ENCODE measurements at regions of chr14 and their contacts with region 1.

Region 1: DNA sequence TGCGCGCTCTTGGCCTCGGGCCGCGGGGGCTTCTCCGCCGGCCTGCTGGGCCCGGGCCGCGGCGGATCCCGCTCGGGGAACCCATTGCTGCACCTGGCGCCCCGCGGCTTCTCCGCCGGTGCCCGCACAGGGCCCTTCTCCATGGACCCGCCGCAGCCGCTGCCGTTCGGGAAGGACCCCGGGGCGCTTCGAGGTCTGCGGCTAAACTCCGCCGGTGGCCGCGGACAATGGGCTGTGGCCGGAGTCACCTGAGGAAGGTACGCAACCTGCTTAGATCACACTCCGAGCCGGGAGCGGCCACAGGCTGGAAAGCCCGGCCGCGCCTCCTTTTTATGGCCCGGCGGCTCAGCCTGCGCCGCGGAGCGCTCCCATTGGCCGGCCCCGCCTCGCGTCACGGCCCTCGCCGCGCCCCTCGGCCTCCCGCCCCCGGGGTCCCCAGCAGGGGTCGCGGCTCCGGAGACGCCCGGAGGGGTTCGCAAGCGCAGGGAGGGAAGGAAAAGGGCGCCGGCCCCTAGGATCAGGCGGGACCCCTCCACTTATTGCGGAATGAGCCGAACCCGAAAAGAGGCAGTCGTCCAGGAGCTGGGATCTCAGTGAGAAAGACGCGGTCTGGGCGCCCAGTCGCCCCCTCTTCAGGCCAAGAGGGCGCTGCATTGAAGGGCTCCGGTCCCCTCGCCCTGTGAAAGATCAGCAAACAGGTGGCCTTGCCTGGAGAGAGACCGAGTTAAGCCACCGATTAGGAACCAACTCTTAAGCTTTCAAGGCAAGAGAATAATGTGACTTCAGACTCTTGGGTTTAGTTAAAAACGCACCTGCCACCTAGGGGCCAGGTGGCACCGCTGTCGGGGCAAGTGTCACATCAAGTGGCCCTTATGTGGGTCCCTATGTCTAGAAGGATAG is at the start of gene GCH1:
- DNase-seq: peak; percentile 72
- H3K4me3 Mint-ChIP-seq: peak within 1 kb of the TSS; percentile 86
- H3K27ac Mint-ChIP-seq: peak within 1 kb of the TSS; percentile 88
- H3K4me1 Mint-ChIP-seq: peaks cover 20% of the 10 kb centered on the region
- H3K27me3 Mint-ChIP-seq: no peaks in the 10 kb centered on the region
- total RNA-seq, gene GCH1: 56.8 to 57.3 TPM

Region 2: DNA sequence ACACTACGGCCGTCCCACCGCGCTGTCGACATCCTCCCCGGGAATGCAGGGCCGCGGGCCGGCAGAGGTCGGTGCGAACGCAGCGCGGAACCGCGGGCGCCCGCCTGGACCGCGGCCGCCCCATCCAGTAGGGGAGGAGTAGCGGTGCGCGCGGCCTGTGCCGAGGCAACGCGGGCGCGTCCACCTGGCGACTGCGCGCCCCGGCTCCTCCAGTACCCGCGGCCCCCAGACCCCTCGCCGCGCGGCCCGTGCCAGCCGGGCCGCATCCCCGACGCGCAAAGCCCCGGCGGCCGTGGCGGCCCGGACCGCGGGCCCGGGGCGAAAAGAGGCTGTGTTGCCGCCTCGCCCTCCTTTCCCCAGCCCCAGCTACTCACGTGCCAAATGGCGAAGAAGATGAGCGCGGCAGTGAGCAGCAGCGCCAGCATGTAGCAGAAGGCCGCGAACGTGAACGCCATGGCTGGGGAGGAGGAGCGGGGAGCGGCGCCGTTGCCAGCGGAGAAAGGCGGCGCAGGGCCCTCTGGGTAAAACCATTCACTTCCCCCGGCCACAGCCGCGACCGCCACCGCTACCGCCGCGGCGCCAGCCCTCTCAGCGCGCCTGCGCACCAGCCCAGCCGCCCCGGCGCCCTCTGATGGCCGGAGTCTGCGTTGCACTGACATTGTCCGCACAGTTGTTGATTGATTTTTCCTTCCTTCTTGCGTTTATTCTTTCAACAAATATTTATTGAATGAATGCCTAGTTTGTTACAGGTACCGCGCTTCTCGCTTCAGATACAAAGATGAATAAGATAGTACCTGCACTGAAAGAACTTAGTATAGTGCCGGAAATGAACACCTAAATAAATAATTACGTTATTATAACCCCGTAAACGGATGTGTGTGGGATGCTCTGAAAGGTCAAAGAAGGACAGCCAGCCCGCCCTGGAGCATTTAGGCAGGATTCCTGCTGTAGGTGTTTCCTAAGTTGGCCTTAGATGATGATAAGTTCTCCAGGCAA is 461.6 kb before region 1 on chr14 and contains the start of gene CNIH1:
- CTCF ChIA-PET with region 1: no interaction called
- intact Hi-C with region 1: loop called (anchors 5 kb)
- DNase-seq: peak; percentile 93
- H3K4me3 Mint-ChIP-seq: peak within 1 kb of the TSS; percentile 87
- H3K27ac Mint-ChIP-seq: peak within 1 kb of the TSS; percentile 97
- H3K4me1 Mint-ChIP-seq: peaks cover 48% of the 10 kb centered on the region
- H3K27me3 Mint-ChIP-seq: no peaks in the 10 kb centered on the region
- total RNA-seq, gene CNIH1: 68.1 to 78.4 TPM

Region 3: DNA sequence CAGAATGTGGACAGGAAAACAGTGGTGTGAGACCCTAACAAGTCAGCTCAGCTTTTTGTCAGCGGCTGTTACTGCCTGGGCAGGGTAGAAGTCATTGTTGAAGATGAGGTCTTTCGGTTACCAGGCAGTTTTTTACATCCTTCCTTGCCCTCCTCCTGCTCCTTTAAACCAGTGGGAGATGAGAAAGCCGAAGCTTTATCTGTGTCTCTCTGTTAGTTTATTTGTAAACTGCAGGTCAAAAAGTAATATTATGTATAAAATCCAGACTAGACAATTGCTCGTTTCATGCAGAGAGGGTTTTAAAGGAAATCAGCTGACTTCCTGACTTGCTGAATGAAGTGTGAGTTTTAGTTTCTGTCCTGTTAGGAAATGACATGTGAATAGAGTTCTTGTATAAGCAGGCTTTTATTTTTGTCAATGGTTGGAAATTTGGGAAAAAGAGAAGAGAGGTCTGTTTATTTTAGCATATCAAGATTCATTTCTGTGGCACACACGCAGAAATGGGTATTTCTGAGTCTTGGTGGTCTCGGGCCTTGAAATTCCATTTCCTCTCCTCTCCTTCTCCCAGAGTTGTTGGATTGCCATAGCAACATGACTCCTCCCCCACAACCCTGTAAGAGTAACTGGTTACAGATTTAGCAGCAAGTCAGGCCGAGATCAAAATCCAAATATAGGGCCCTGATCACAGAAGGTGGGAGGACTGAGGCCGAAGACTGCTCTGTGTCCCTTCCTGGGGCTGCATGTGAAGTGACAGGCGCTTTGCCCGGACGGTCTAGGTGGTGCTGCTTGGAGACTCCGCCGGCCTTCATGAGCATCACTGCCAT is 275.0 kb before region 1 on chr14:
- CTCF ChIA-PET with region 1: no interaction called
- intact Hi-C with region 1: loop called (anchors 5 kb)
- DNase-seq: peak; percentile 62
- H3K4me3 Mint-ChIP-seq: peak overlapping the region; percentile 61
- H3K27ac Mint-ChIP-seq: peak overlapping the region; percentile 86
- H3K4me1 Mint-ChIP-seq: peaks cover 57% of the 10 kb centered on the region
- H3K27me3 Mint-ChIP-seq: no peaks in the 10 kb centered on the region

Region 4: DNA sequence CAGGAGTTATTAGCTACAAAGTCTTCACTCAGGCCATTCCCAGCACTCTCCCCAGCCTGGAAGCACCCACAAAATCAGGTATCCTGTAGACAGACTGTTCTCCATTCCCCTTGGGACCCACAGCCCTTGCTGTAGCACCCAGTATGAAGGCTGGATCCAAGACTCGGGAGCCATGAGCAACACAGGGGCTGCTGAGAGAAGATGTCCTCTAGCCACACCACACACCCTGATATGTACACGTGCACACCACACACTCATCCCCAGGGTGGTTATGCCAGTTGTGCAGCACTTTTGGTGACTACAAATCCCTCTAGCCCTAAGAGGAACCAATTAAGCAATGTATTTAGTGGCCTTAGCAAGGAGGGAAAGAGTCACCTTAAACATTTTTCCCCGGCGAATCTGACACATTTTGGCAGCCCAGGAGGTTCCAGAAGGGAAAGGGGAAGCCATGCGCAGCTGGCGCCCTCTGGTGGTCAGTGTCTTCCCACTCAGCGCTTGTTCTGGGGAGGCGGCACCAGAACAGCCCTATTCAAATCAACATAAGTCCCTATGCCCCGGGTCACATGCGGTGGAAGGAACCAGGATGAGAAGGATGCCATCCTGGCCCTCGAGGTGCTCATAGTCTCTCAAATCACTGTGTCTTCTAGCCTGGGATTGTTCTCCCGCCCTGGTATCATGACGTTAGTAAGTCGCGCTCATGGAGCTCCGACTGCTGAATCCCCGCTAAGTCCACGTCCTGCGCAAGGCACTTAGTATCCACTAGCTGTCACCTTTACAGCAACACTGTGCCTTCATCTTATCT is 97.0 kb before region 1 on chr14:
- CTCF ChIA-PET with region 1: interaction called, 3 read pairs
- intact Hi-C with region 1: loop called (anchors 2 kb)
- DNase-seq: peak; percentile 90
- H3K4me3 Mint-ChIP-seq: peak overlapping the region; percentile 6
- H3K27ac Mint-ChIP-seq: no peak overlapping the region
- H3K4me1 Mint-ChIP-seq: peaks cover 6% of the 10 kb centered on the region
- H3K27me3 Mint-ChIP-seq: peaks cover 11% of the 10 kb centered on the region

Region 5: DNA sequence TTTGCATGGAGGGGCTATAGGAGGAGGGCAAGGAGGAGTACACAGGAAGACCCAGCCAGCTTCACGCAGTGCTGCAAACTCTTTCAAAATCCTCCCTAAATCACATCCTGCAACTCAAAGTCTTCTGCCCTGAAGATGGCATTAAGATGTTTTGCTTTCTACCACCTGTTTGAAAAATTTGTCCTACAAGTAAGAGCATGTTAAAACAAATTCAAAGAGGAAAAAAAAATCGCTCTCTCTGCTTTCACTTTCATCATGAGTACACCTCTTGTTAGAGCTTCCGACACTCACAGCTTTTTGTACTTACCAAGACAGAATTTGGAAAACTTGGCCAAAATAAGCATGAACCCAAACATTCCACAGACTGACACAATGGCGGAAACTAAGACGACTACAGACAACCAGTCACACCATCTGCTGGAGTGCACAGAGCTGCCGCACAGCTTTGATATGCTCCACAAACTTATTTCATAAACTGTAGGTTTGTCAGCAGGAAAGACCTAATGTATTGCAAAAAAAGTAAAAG is 21.5 kb before region 1 on chr14:
- CTCF ChIA-PET with region 1: interaction called, 19 read pairs
- intact Hi-C with region 1: loop called (anchors 1 kb)
- DNase-seq: peak; percentile 38
- H3K4me3 Mint-ChIP-seq: peak overlapping the region; percentile 78
- H3K27ac Mint-ChIP-seq: peak overlapping the region; percentile 96
- H3K4me1 Mint-ChIP-seq: peaks cover 34% of the 10 kb centered on the region
- H3K27me3 Mint-ChIP-seq: no peaks in the 10 kb centered on the region

Region 6: DNA sequence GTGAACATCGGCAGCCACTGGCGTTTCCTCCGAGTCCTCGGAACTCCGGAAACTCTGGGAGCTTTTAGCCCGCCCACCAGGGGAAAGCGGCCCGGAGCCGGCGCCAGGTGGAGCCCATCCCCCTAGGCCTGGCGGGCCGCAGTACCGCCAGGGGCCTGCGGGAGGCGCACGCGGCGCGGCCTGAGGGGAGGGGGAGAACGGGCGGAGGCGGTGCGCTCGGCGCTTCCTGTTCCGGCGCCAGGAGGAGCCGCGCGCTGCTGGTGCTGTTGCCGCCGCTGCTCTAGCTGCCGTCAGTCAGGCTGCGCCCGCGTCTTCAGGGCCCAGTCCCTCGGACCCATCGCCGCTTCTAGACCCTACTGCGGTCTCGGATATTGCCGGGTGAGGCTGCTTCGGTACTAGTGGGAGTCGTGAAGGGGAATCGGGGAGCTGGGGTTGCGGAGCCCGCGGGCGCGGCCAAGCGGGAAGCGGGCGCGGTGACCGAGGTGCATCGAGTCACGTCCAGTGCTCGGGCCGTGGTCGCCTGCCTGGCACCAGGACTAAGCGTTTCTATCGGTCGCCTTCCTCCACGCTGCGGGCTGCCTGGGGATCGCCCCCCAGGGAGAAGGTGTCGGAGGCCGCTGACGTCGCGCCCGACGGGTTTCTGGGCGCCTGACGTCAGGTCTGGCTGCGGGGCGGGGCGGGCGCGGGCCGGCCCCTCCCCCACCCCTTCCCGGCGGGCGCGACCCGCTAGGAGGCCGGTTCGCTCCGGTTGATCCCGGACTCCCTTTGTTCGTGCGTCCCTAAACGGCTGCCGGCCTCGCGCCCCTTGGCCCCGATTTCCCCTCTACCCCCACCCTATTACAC is 148.9 kb after region 1 on chr14 and contains the start of gene MAPK1IP1L:
- CTCF ChIA-PET with region 1: interaction called, 4 read pairs
- intact Hi-C with region 1: loop called (anchors 1 kb)
- DNase-seq: peak; percentile 90
- H3K4me3 Mint-ChIP-seq: peak within 1 kb of the TSS; percentile 86
- H3K27ac Mint-ChIP-seq: peak within 1 kb of the TSS; percentile 95
- H3K4me1 Mint-ChIP-seq: peaks cover 42% of the 10 kb centered on the region
- H3K27me3 Mint-ChIP-seq: no peaks in the 10 kb centered on the region
- total RNA-seq, gene MAPK1IP1L: 78.2 to 83.4 TPM

Region 7: GRCh38 chr14:55446218-55446654 is 543.5 kb after region 1 on chr14:
- CTCF ChIA-PET with region 1: no interaction called
- intact Hi-C with region 1: no loop called
- DNase-seq: peak; percentile 76
- H3K4me3 Mint-ChIP-seq: no peak overlapping the region
- H3K27ac Mint-ChIP-seq: no peak overlapping the region
- H3K4me1 Mint-ChIP-seq: peaks cover 13% of the 10 kb centered on the region
- H3K27me3 Mint-ChIP-seq: no peaks in the 10 kb centered on the region

Measured in activated naive CD4-positive, alpha-beta T cell treated with anti-CD3 and anti-CD28 coated beads for 36 hours (primary cell).